H1 (cell line): ENCODE measurements at regions of chr3 and their contacts with region 1.

Region 1: GRCh38 chr3:65412588-65412987 is 626.1 kb downstream of the MAGI1 start:
- DNase-seq: no peak
- H3K4me3 ChIP-seq: no peak overlapping the region
- H3K27ac ChIP-seq: no peak overlapping the region
- H3K4me1 ChIP-seq: peaks cover 0 to 5% (median 3%) of the 10 kb centered on the region in 4 experiments; a peak in 2 of 7 replicates
- H3K27me3 ChIP-seq: no peaks in the 10 kb centered on the region
- CTCF ChIP-seq: peak; percentile 42 to 51 (median 44)
- EP300 ChIP-seq: no peak
- POLR2A ChIP-seq: no peak
- RAD21 ChIP-seq: peak; percentile 64 to 74

Region 2: DNA sequence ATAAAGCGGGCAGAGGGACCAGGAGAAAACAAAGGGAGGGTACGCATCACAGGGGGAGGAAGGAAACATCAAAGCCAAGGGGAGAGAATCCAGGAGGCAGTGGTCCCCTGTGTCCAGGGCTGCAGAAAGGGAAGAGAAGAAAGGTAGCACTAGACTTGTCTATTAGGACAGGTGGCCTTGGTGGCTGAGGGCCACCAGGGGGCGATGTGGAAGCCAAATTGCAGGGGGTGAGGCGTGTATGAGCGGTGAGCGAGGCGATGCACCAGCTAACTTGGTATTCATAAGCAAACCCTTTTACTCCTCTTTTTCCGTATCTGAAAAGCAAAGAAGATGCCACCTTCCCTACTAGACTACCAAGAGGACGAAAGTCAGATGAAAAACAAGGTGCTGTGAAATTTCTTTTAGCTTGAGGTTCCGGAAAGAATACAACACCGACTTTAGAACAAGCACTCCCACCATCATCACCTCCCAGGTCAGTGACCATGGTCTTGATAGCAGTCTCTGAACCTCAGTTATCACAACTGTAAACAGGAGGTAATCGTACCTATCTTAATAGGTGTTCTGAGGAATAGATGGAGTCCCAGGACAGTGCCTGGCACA is 70.4 kb before region 1 on chr3:
- CTCF ChIA-PET with region 1: interaction called, 20 read pairs
- POLR2A ChIA-PET with region 1: no interaction called
- DNase-seq: peak; percentile 59 to 89
- H3K4me3 ChIP-seq: no peak overlapping the region
- H3K27ac ChIP-seq: no peak overlapping the region
- H3K4me1 ChIP-seq: peaks cover 4 to 18% (median 7%) of the 10 kb centered on the region in 4 experiments; a peak in 6 of 7 replicates
- H3K27me3 ChIP-seq: no peaks in the 10 kb centered on the region
- CTCF ChIP-seq: peak; percentile 82 to 97 (median 96)
- EP300 ChIP-seq: no peak
- POLR2A ChIP-seq: no peak
- RAD21 ChIP-seq: peak; percentile 74 to 84